ENCODE measurements at regions of chr2 and their contacts with region 1.

Region 1: GRCh38 chr2:46200220-46200621 is 97.0 kb upstream of the EPAS1 start:
- DNase-seq: no peak
- ATAC-seq: peak; percentile 85
- H3K4me3 ChIP-seq: no peak overlapping the region
- H3K27ac ChIP-seq: no peak overlapping the region
- H3K4me1 ChIP-seq: peaks cover 3% of the 10 kb centered on the region
- H3K27me3 ChIP-seq: no peaks in the 10 kb centered on the region
- CTCF ChIP-seq: no peak
- EP300 ChIP-seq: no peak
- POLR2A ChIP-seq: no peak
- RAD21 ChIP-seq: no peak

Region 2: GRCh38 chr2:44674473-44675284 is 1525.5 kb before region 1 on chr2:
- CTCF ChIA-PET with region 1: no interaction called
- POLR2A ChIA-PET with region 1: no interaction called
- RAD21 ChIA-PET with region 1: no interaction called
- SMC1A ChIA-PET with region 1: no interaction called
- in situ Hi-C with region 1: no loop called
- intact Hi-C with region 1: no loop called
- DNase-seq: no peak
- ATAC-seq: peak; percentile 46; the same call in 2 of the 3 replicates
- H3K4me3 ChIP-seq: no peak overlapping the region
- H3K27ac ChIP-seq: no peak overlapping the region
- H3K4me1 ChIP-seq: no peaks in the 10 kb centered on the region
- H3K27me3 ChIP-seq: no peaks in the 10 kb centered on the region
- CTCF ChIP-seq: no peak
- EP300 ChIP-seq: no peak
- POLR2A ChIP-seq: no peak
- RAD21 ChIP-seq: no peak

Region 3: GRCh38 chr2:46187112-46187618 is 13.1 kb before region 1 on chr2:
- CTCF ChIA-PET with region 1: no interaction called
- POLR2A ChIA-PET with region 1: interaction called, 4 read pairs
- RAD21 ChIA-PET with region 1: interaction called, 5 read pairs
- SMC1A ChIA-PET with region 1: interaction called, 10 read pairs
- in situ Hi-C with region 1: no loop called
- intact Hi-C with region 1: no loop called
- DNase-seq: peak; percentile 70
- ATAC-seq: peak; percentile 99
- H3K4me3 ChIP-seq: peak overlapping the region; percentile 41
- H3K27ac ChIP-seq: peak overlapping the region; percentile 66
- H3K4me1 ChIP-seq: peaks cover 5% of the 10 kb centered on the region
- H3K27me3 ChIP-seq: no peaks in the 10 kb centered on the region
- CTCF ChIP-seq: no peak
- EP300 ChIP-seq: peak in 1 of 2 experiments; percentile 20; a peak in 1 of 4 replicates
- POLR2A ChIP-seq: no peak
- RAD21 ChIP-seq: no peak

Measured in GM12878 (cell line).